ENCODE measurements at regions of chr2 and their contacts with region 1.

Region 1: GRCh38 chr2:176085861-176086771 is 2.4 kb upstream of the EVX2 start:
- DNase-seq: peak; percentile 34
- H3K4me3 Mint-ChIP-seq: no peak overlapping the region
- H3K27ac Mint-ChIP-seq: no peak overlapping the region
- H3K4me1 Mint-ChIP-seq: no peaks in the 10 kb centered on the region
- H3K27me3 Mint-ChIP-seq: peaks cover 41% of the 10 kb centered on the region
- CTCF ChIP-seq: peak; percentile 52

Region 2: DNA sequence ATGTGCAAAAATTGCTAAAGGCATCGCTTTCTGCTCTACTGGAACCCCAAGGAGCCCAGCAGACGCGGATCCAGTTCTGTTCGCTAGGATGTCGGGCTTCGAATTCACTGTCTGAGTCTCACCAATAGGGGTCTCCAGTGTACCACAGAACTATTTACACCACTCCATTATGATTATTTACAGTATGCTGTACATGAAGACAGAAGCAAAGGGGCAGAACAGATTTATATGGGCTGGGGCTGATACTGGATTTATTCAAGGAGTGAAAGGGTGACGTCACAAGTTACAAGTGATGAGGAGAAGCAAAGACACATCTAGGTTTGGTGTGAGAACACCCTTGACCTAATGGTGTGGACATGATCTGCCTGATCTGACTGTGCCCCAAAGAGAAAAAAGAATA is 719.3 kb before region 1 on chr2:
- CTCF ChIA-PET with region 1: no interaction called
- intact Hi-C with region 1: loop called (anchors 2 kb)
- DNase-seq: peak; percentile 62
- H3K4me3 Mint-ChIP-seq: no peak overlapping the region
- H3K27ac Mint-ChIP-seq: no peak overlapping the region
- H3K4me1 Mint-ChIP-seq: peaks cover 9% of the 10 kb centered on the region
- H3K27me3 Mint-ChIP-seq: no peaks in the 10 kb centered on the region
- CTCF ChIP-seq: peak; percentile 82

Region 3: GRCh38 chr2:175690113-175690837 is 395.8 kb before region 1 on chr2:
- CTCF ChIA-PET with region 1: interaction called, 8 read pairs
- intact Hi-C with region 1: loop called (anchors 2 kb)
- DNase-seq: peak; percentile 51
- H3K4me3 Mint-ChIP-seq: no peak overlapping the region
- H3K27ac Mint-ChIP-seq: no peak overlapping the region
- H3K4me1 Mint-ChIP-seq: no peaks in the 10 kb centered on the region
- H3K27me3 Mint-ChIP-seq: peaks cover 39% of the 10 kb centered on the region
- CTCF ChIP-seq: peak; percentile 76